HEK293 (cell line): ENCODE measurements at regions of chr6 and their contacts with region 1.

Region 1: DNA sequence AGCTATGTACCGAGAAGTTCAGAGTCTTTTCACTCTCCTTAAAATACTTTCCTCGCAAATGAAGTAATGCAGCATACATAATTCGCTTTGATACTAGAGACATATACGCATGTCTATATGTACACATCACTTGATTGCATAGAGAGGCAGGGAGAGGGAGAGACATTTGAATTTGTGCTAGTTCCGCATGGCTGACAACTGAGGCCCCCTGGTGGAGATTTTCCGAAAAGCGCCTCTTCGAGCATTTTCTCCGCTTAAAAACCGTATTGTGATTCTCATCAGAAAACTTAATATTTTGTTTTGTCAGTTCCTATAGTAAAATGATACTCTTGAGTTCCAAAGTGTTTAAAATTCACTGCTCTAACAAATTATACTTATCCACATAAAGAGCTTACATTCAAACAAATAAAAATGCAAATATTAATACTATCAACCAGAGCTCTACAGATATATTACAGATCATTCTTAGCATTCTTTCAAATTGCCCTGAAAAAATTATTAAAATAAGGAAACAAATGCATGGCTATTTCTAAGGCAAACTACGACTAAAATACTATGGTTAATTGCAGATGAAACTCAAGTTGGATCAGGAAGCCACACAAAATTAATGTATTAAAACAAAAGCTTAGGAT is 637 bp downstream of the MYLK4 start:
- H3K4me3 ChIP-seq: no peak overlapping the region
- H3K27ac ChIP-seq: no peak overlapping the region
- H3K4me1 ChIP-seq: peaks cover 13% of the 10 kb centered on the region
- CTCF ChIP-seq: no peak

Region 2: DNA sequence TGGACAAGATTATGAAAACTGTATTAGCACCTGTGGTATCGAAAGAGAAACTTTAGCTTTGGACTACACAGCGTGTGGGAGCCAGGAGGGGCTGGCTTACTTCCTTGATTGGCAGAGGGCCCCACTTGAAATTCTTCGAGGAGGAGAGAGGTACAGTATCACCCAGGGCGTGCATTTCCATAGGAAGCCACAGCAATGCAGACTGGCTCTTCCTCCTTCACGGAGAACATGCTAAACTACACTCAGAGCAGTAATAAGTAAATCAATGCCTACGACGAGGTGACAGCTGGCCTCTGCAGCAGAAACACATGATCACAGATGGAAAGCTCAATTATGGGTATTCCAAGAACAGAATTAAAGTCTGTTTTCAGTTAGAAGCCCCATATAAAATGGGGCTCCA is 43.5 kb before region 1 on chr6:
- CTCF ChIA-PET with region 1: interaction called, 18 read pairs
- POLR2A ChIA-PET with region 1: no interaction called
- H3K4me3 ChIP-seq: no peak overlapping the region
- H3K27ac ChIP-seq: no peak overlapping the region
- H3K4me1 ChIP-seq: no peaks in the 10 kb centered on the region
- CTCF ChIP-seq: no peak

Region 3: GRCh38 chr6:2733324-2733723 is 16.8 kb before region 1 on chr6:
- CTCF ChIA-PET with region 1: interaction called, 212 read pairs
- POLR2A ChIA-PET with region 1: interaction called, 3 read pairs
- H3K4me3 ChIP-seq: no peak overlapping the region
- H3K27ac ChIP-seq: no peak overlapping the region
- H3K4me1 ChIP-seq: no peaks in the 10 kb centered on the region
- CTCF ChIP-seq: no peak

Region 4: DNA sequence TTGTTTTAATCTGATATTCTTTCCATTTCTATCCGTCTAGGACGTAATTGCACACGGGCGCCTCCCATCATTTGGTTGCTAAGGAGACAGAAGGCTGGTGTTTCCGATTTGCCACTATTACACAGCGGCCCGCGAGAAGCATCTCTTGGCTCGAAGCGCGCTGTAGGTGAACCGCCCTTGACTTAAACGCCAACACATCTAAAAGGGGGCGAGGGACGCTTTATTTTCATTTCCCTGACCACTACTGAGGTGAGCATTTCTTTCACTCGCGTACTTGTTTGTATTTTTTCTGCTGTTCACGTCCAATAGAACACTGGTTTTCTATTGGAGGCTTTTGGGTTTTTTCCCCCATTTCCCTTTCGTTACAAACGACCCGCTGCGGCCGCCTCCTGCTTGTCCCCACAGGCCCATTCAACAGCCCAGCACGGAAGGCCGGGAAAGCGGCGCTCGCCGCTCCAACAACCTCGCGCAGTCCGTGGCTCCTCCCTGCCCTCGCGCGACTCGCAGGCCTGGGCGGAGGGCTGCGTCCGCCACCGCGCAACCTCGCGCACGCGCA is 14.6 kb after region 1 on chr6:
- CTCF ChIA-PET with region 1: interaction called, 60 read pairs
- POLR2A ChIA-PET with region 1: interaction called, 3 read pairs
- H3K4me3 ChIP-seq: peak overlapping the region; percentile 43
- H3K27ac ChIP-seq: peak overlapping the region; percentile 63
- H3K4me1 ChIP-seq: peaks cover 17% of the 10 kb centered on the region
- CTCF ChIP-seq: no peak

Region 5: DNA sequence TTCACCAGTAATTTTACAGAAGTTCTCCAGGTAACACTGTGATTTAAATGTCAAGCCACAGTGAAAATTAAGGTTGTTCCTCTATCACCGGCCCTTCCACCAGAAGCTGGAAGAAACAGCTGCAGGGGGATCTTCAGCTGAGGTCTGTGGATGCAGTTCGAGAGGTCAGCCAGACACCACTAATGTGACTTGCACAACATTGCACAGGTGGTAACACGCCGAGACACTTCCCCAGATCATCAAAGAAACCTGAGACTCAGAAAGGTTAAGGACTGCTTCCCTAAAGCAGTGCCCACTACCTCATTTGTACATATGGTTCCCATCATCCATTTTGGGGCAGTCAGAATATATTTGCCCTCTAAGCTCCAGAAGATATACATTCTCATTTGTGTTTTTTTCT is 161.1 kb after region 1 on chr6:
- CTCF ChIA-PET with region 1: no interaction called
- POLR2A ChIA-PET with region 1: no interaction called
- H3K4me3 ChIP-seq: no peak overlapping the region
- H3K27ac ChIP-seq: no peak overlapping the region
- H3K4me1 ChIP-seq: no peaks in the 10 kb centered on the region
- CTCF ChIP-seq: no peak